OCI-LY7 (cell line): ENCODE measurements at regions of chr4 and their contacts with region 1.

Region 1: DNA sequence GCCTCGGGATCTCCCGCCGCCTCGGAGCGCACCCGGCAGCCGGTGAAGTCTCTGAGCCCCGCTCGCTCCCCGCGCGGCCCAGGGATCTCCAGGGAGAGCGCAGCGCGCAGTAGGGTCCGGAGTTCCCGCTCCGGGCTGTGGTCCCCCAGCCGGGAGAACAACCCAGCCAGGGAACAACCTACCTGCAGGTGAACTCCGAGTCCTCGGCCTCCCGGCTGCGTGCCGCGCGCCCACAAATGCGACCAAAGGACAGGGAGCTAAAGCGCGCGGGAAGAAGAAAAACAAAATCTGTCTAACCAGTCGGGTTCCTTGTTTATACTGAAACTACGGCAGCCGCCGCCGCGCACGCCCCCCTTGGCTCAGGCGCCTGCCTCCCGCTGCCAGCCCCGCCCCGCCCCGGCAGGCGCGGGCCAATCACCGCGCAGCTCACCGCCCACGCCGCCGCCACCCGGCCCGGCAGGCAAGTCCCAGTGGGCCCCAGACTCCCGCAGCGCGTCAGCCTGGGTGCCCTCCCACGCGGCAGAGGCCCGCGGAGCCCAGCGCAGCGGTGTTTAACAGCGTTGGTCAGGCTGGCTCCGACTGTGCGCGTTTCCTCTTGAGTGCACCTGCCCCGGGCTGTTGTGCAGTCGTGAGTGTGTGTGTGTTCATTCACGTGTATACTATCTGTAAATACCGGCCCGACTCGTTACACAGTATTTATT is at the start of gene RASGEF1B:
- DNase-seq: peak; percentile 91
- H3K4me3 ChIP-seq: peak within 1 kb of the TSS; percentile 84
- H3K27ac ChIP-seq: peak within 1 kb of the TSS; percentile 86
- H3K4me1 ChIP-seq: peaks cover 36% of the 10 kb centered on the region
- CTCF ChIP-seq: no peak
- total RNA-seq, gene RASGEF1B: 10.6 and 12.6 TPM in 2 replicates

Region 2: DNA sequence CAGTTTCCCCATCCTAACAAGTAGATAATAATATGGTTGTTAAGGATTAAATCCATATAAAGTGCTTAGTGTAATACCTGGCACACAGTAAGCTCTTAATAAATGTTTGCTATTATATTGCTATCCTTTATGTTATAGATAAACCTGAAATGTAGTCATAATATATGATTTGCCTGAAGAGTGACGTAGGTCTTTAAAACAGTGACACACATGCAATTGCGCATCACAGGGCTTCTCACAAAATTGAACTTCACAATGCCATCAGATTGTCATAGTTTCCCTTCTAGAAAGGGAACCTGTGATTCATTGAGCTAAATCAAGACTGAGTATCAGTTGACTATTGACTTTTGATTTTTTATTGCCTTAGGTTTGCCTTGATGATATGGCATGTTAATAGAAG is 175.7 kb before region 1 on chr4:
- CTCF ChIA-PET with region 1: no interaction called
- POLR2A ChIA-PET with region 1: no interaction called
- intact Hi-C with region 1: no loop called
- DNase-seq: no peak
- H3K4me3 ChIP-seq: no peak overlapping the region
- H3K27ac ChIP-seq: no peak overlapping the region
- H3K4me1 ChIP-seq: no peaks in the 10 kb centered on the region
- CTCF ChIP-seq: no peak

Region 3: DNA sequence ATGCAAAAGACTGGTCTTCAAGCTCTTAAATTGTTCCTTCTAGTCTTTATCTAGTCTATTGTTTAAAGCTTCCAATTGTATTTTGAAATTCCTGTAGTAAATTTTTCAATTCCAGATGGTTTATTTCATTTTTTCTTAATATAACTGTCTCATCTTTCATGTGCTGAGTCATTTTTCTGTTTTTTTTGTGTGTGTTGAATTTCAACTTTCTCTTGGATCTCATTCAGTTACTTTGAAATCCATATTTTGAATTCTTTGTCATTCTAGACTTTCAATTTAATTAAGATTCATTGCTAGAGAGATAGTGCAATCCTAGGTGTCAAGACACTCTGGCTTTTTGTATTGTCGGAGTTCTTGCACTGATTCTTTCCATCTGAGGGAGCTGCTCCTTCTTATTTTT is 128.7 kb before region 1 on chr4:
- CTCF ChIA-PET with region 1: no interaction called
- POLR2A ChIA-PET with region 1: no interaction called
- intact Hi-C with region 1: no loop called
- DNase-seq: no peak
- H3K4me3 ChIP-seq: no peak overlapping the region
- H3K27ac ChIP-seq: no peak overlapping the region
- H3K4me1 ChIP-seq: no peaks in the 10 kb centered on the region
- CTCF ChIP-seq: no peak

Region 4: DNA sequence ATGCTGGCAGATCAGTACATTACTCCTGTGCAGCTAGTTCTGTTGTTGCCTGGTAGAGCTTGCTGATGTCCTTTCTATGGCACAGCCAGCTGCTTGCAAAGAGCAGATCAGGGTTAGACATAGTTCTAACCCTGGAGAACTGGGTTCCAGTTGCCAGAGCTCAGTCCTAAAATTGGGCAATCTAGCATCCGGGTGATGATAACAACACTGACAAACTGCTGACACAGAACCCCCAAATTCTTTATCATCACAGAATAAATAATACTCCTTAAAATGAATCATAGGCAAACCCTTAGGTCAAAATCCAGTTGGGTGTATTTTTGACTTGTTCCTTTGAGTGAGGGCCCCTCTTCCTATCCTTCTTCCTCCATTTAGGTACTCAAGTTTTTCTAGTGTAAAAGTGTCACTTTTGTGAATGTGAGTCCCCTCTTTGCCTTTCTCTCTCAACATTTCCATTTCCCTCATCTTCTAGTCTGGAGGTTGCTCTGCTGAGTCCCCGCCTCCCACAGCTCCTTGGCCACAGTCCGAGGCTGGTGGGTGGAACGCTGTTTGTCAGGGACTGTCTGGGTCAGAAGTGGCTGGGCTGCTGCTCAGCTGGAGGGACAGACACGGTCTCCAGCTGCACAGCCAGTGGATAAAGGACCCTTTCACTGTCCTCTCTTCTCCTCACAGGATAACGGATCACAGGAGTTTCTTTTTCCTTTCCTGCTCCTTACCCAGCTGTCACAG is 93.6 kb after region 1 on chr4:
- CTCF ChIA-PET with region 1: interaction called, 6 read pairs
- POLR2A ChIA-PET with region 1: interaction called, 9 read pairs
- intact Hi-C with region 1: loop called (anchors 1 kb)
- DNase-seq: peak; percentile 37
- H3K4me3 ChIP-seq: peak overlapping the region; percentile 48
- H3K27ac ChIP-seq: peak overlapping the region; percentile 43
- H3K4me1 ChIP-seq: peaks cover 69% of the 10 kb centered on the region
- CTCF ChIP-seq: no peak

Region 5: GRCh38 chr4:81621490-81621889 is 149.8 kb after region 1 on chr4:
- CTCF ChIA-PET with region 1: no interaction called
- POLR2A ChIA-PET with region 1: interaction called, 21 read pairs
- intact Hi-C with region 1: no loop called
- DNase-seq: peak; percentile 73
- H3K4me3 ChIP-seq: peak overlapping the region; percentile 1
- H3K27ac ChIP-seq: peak overlapping the region; percentile 49
- H3K4me1 ChIP-seq: peaks cover 58% of the 10 kb centered on the region
- CTCF ChIP-seq: no peak

Region 6: GRCh38 chr4:81724925-81725329 is 253.2 kb after region 1 on chr4:
- CTCF ChIA-PET with region 1: interaction called, 7 read pairs
- POLR2A ChIA-PET with region 1: interaction called, 6 read pairs
- intact Hi-C with region 1: loop called (anchors 2 kb)
- DNase-seq: peak; percentile 55
- H3K4me3 ChIP-seq: no peak overlapping the region
- H3K27ac ChIP-seq: no peak overlapping the region
- H3K4me1 ChIP-seq: peaks cover 24% of the 10 kb centered on the region
- CTCF ChIP-seq: peak; percentile 62

Region 7: GRCh38 chr4:82284858-82285805 is 813.4 kb after region 1 on chr4:
- CTCF ChIA-PET with region 1: no interaction called
- POLR2A ChIA-PET with region 1: no interaction called
- intact Hi-C with region 1: loop called (anchors 5 kb)
- DNase-seq: peak; percentile 99
- H3K4me3 ChIP-seq: peak overlapping the region; percentile 62
- H3K27ac ChIP-seq: peak overlapping the region; percentile 22
- H3K4me1 ChIP-seq: peaks cover 25% of the 10 kb centered on the region
- CTCF ChIP-seq: peak; percentile 89